AG04449 (cell line): ENCODE measurements at regions of chr9 and their contacts with region 1.

Region 1: GRCh38 chr9:13139641-13140171 is 139.8 kb downstream of the MPDZ start:
- DNase-seq: peak; percentile 67
- H3K4me3 ChIP-seq: peak overlapping the region; percentile 0; the same call in 1 of the 2 replicates
- CTCF ChIP-seq: no peak

Region 2: DNA sequence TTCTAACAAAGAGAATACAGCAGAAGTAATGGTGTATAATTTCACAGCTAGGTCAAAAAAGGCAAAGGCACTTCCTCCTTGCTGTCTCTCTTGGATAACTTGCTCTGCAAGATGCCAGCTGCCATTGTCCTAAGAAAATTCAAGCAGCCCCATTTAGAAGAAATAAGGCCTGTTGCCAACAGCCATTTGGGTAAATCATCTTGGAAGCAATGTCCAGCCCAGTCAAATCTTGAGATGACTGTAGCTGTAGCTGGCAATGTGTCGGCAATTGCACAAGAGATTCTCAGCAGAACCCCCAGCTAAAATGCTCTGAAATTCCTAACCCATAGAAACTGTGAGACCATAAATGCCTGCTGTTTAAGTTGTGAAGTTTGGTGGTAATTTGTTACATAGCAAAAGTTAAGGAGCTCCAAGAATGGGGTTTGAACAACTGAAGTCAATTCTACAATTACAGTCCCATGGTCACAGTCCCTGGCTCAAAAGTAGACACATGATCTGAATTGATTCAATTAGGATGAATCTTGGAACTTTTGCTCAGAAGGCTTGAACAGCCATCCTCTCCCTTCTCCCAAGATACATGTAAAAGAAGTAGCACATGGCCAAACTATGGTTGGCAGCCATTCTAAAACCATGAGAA is 11.4 kb before region 1 on chr9:
- CTCF ChIA-PET with region 1: interaction called, 14 read pairs
- POLR2A ChIA-PET with region 1: interaction called, 3 read pairs
- DNase-seq: no peak
- H3K4me3 ChIP-seq: no peak overlapping the region
- CTCF ChIP-seq: no peak

Region 3: DNA sequence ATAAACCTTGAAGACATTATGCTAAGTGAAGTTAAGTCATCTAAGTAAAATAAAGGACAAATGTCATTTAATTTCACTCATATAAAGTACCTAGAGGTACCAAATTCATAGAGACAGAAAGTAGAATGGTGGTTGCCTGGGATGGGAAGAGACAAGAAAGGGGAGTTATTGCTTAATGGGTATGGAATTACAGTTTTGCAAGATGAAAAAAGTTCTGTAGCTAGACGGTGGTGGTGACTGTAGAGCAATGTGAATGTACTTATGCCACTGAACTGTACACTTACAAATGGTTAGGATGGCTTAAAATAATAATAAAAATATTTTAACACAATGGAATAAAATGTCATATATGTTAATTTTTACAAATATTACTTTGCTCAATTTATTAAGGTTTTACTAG is 11.8 kb after region 1 on chr9:
- CTCF ChIA-PET with region 1: no interaction called
- POLR2A ChIA-PET with region 1: no interaction called
- DNase-seq: no peak
- H3K4me3 ChIP-seq: no peak overlapping the region
- CTCF ChIP-seq: no peak